CD4-positive, alpha-beta T cell (primary cell): ENCODE measurements at regions of chr17 and their contacts with region 1.

Region 1: GRCh38 chr17:46139432-46140210 is 53.6 kb downstream of the KANSL1 start:
- DNase-seq: no peak
- ATAC-seq: no peak
- H3K4me3 ChIP-seq: no peak overlapping the region
- H3K4me3 Mint-ChIP-seq: peak overlapping the region; percentile 40
- H3K27ac ChIP-seq: no peak overlapping the region
- H3K27ac Mint-ChIP-seq: peak overlapping the region; percentile 75
- H3K4me1 ChIP-seq: peaks cover 26% of the 10 kb centered on the region
- H3K4me1 Mint-ChIP-seq: peaks cover 97% of the 10 kb centered on the region
- H3K27me3 ChIP-seq: no peaks in the 10 kb centered on the region
- H3K27me3 Mint-ChIP-seq: no peaks in the 10 kb centered on the region
- CTCF ChIP-seq: no peak

Region 2: GRCh38 chr17:46100590-46100989 is 39.0 kb before region 1 on chr17:
- CTCF ChIA-PET with region 1: interaction called, 3 read pairs
- POLR2A ChIA-PET with region 1: no interaction called
- intact Hi-C with region 1: loop called in 1 of 2 experiments (anchors 5 kb)
- DNase-seq: no peak
- ATAC-seq: no peak
- H3K4me3 ChIP-seq: no peak overlapping the region
- H3K4me3 Mint-ChIP-seq: no peak overlapping the region
- H3K27ac ChIP-seq: no peak overlapping the region
- H3K27ac Mint-ChIP-seq: peak overlapping the region; percentile 55
- H3K4me1 ChIP-seq: peaks cover 31% of the 10 kb centered on the region
- H3K4me1 Mint-ChIP-seq: peaks cover 77% of the 10 kb centered on the region
- H3K27me3 ChIP-seq: no peaks in the 10 kb centered on the region
- H3K27me3 Mint-ChIP-seq: no peaks in the 10 kb centered on the region
- CTCF ChIP-seq: no peak

Region 3: DNA sequence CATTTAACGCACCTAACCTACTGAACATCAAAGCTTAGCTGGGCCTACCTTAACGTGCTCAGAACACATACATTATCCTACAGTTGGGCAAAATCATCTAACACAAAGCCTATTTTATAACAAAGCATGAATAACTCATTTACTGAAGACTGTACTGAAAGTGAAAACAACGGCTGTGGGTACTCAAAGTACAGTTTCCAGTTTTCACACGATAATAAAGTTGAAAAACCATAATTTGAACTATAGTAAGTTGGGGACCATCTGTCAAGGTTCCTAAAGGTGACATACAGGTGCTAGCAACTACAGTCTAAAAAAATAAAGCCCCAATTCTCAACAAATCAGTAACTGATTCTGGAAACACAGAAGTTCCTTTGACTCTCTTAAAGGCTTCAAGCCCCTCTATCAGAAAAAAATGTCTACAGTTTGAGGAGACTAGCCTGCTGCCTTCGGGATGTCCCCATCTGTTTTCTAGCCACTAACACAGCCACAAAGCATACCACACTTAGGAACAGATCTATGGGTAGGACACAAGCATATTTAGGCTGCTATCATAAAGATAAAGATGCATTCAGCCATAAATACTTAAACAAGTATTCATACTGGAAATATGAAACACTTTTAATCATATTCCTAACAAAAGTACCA is 17.7 kb before region 1 on chr17:
- CTCF ChIA-PET with region 1: interaction called, 5 read pairs
- POLR2A ChIA-PET with region 1: interaction called, 4 read pairs
- intact Hi-C with region 1: loop called in 1 of 2 experiments (anchors 2 kb)
- DNase-seq: no peak
- ATAC-seq: peak; percentile 27
- H3K4me3 ChIP-seq: no peak overlapping the region
- H3K4me3 Mint-ChIP-seq: peak overlapping the region; percentile 26
- H3K27ac ChIP-seq: no peak overlapping the region
- H3K27ac Mint-ChIP-seq: peak overlapping the region; percentile 78
- H3K4me1 ChIP-seq: peaks cover 42% of the 10 kb centered on the region
- H3K4me1 Mint-ChIP-seq: peaks cover 91% of the 10 kb centered on the region
- H3K27me3 ChIP-seq: no peaks in the 10 kb centered on the region
- H3K27me3 Mint-ChIP-seq: no peaks in the 10 kb centered on the region
- CTCF ChIP-seq: no peak

Region 4: DNA sequence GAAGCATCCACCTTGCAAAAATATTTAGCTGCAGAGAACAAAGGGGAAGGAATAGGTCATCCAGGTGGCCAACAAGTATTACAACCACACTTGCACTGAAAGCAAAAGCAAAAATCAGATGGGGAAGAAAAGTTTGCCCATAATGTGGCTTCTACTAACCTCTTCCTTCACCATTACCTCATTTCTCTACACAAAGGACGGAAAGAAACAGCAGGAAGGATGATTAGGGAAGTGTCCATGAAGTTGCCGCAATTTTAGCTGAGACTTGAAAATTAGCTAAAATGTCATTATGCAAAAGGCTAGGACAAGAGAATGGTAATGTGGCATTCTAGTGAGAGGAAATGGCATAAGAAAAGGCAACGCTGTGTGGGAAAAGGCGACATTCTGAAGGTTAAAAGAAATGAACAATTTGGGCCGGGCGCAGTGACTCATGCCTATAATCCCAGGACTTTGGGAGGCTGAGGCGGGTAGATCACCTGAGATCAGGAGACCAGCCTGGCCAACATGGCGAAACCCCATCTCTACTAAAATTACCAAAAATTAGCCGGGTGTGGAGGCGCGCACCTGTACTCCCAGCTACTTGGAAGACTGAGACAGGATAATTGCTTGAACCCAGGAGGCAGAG is 39.9 kb after region 1 on chr17:
- CTCF ChIA-PET with region 1: interaction called, 5 read pairs
- POLR2A ChIA-PET with region 1: no interaction called
- intact Hi-C with region 1: loop called in 1 of 2 experiments (anchors 5 kb)
- DNase-seq: peak in 3 of 14 experiments; percentile 27 to 54 (median 32)
- ATAC-seq: peak; percentile 45
- H3K4me3 ChIP-seq: no peak overlapping the region
- H3K4me3 Mint-ChIP-seq: peak overlapping the region; percentile 53
- H3K27ac ChIP-seq: no peak overlapping the region
- H3K27ac Mint-ChIP-seq: peak overlapping the region; percentile 80
- H3K4me1 ChIP-seq: peaks cover 57% of the 10 kb centered on the region
- H3K4me1 Mint-ChIP-seq: peaks cover 94% of the 10 kb centered on the region
- H3K27me3 ChIP-seq: no peaks in the 10 kb centered on the region
- H3K27me3 Mint-ChIP-seq: no peaks in the 10 kb centered on the region
- CTCF ChIP-seq: no peak